Posterior cingulate gyrus (tissue), 11 donors: ENCODE measurements at regions of chr14 and their contacts with region 1.

Region 1: GRCh38 chr14:58864751-58865513 is 227.2 kb downstream of the DACT1 start:
- DNase-seq: peak in 1 of 10 donors; percentile 19

Region 2: GRCh38 chr14:58812050-58812910 is 52.7 kb before region 1 on chr14:
- intact Hi-C with region 1: loop called (anchors 2 kb)
- DNase-seq: no peak